ENCODE measurements at regions of chr6 and their contacts with region 1.

Region 1: DNA sequence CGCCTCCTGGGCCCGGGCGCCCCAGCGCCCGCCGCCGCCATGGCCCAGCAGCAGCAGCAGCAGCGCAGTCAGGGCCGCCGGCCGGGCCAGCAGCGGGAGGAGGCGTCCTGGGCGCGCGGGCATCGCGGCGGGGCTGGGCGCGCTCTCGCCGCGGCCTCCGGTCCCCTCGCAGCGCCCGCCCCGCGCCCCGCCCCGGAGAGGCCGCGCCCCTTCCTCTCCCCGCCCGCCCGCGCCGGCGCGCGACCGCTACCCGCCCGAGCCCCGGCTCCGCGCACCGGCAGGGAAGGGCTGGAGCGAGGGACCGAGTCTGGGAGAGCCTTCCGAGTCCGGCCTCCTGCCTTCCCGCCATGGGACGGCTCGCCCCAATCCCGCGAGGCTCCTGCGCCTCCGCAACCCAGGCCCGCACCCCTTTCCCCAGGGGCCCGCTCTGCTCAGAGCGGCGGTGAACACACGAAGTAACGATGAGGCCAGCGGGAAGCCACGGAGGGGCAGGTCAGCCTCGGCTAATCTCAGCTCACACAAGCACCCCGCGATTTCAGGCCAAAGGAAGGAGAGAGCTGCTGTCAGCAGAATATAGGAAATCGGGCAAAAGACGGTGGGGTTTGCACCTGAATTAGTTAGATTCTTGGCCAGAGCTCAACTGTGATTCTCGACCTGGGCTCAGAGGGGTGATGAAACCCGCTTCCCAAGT is at the start of gene TXNDC5:
- DNase-seq: peak; percentile 93
- H3K4me3 Mint-ChIP-seq: peak within 1 kb of the TSS; percentile 92
- H3K27ac Mint-ChIP-seq: peak within 1 kb of the TSS; percentile 81
- H3K4me1 Mint-ChIP-seq: peaks cover 17% of the 10 kb centered on the region
- H3K27me3 Mint-ChIP-seq: no peaks in the 10 kb centered on the region
- total RNA-seq, gene TXNDC5: 111 and 112 TPM in 2 replicates

Region 2: GRCh38 chr6:7922596-7922995 is 11.8 kb after region 1 on chr6:
- intact Hi-C with region 1: no loop called
- DNase-seq: peak; percentile 32
- H3K4me3 Mint-ChIP-seq: no peak overlapping the region
- H3K27ac Mint-ChIP-seq: no peak overlapping the region
- H3K4me1 Mint-ChIP-seq: no peaks in the 10 kb centered on the region
- H3K27me3 Mint-ChIP-seq: peaks cover 14% of the 10 kb centered on the region

Region 3: GRCh38 chr6:8102122-8102958 is 191.5 kb after region 1 on chr6 and contains the start of gene EEF1E1:
- intact Hi-C with region 1: loop called (anchors 1 kb)
- DNase-seq: peak; percentile 97
- H3K4me3 Mint-ChIP-seq: peak within 1 kb of the TSS; percentile 95
- H3K27ac Mint-ChIP-seq: peak within 1 kb of the TSS; percentile 99
- H3K4me1 Mint-ChIP-seq: peaks cover 24% of the 10 kb centered on the region
- H3K27me3 Mint-ChIP-seq: peaks cover 15% of the 10 kb centered on the region
- total RNA-seq, gene EEF1E1: 93.6 and 95.9 TPM in 2 replicates